T-cell (primary cell): ENCODE measurements at regions of chr6 and their contacts with region 1.

Region 1: GRCh38 chr6:10478187-10479040 is 42.7 kb upstream of the GCNT2 start:
- DNase-seq: peak in 2 of 35 experiments; percentile 2 to 56
- ATAC-seq: no peak
- H3K4me3 ChIP-seq: no peak overlapping the region
- H3K4me3 Mint-ChIP-seq: no peak overlapping the region
- H3K27ac ChIP-seq: no peak overlapping the region
- H3K27ac Mint-ChIP-seq: no peak overlapping the region
- H3K4me1 ChIP-seq: no peaks in the 10 kb centered on the region
- H3K4me1 Mint-ChIP-seq: peaks cover 0 to 1% (median 0%) of the 10 kb centered on the region in 3 donors
- H3K27me3 ChIP-seq: peaks cover 0 to 3% of the 10 kb centered on the region in 2 experiments
- H3K27me3 Mint-ChIP-seq: peaks cover 8 to 36% of the 10 kb centered on the region in 2 donors

Region 2: DNA sequence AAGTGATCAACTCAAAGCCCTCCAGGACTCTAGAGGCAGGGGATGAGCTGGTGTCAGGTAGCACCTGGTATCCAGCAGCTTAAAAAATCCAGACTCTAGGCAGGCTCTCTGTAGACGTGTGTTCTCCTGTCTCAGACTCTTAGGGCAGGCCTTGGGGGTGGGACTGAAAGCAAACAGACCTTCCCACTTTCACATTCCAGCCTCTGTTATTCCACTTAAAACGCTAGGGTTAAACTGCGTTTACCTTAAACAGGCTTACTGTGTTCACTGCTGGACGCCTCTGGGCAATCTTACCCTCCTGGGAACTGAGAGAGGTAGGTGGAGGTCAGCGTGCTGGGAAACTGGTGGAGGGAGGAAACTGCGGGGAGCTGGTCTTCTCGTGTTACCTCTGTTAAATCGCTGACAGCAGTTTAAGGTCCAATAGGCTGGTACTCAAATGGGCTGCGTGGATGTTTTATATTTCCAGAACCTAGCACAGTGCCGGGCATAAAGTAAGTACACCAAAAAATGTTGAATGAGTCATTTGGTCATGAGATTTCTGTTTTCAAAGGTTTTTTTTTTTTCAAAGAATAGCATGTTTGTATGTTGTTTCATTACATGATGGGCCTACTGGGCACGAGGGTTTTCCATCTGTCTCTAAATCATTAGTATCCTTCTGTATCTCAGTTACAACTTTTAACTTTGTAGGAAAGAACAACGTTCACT is 42.8 kb after region 1 on chr6 and contains the start of gene GCNT2:
- CTCF ChIA-PET with region 1: no interaction called
- POLR2A ChIA-PET with region 1: no interaction called
- DNase-seq: no peak
- ATAC-seq: no peak
- H3K4me3 ChIP-seq: no peak within 1 kb of the TSS
- H3K4me3 Mint-ChIP-seq: no peak within 1 kb of the TSS
- H3K27ac ChIP-seq: no peak within 1 kb of the TSS
- H3K27ac Mint-ChIP-seq: no peak within 1 kb of the TSS
- H3K4me1 ChIP-seq: no peaks in the 10 kb centered on the region
- H3K4me1 Mint-ChIP-seq: no peaks in the 10 kb centered on the region
- H3K27me3 ChIP-seq: peaks cover 0 to 3% of the 10 kb centered on the region in 2 experiments
- H3K27me3 Mint-ChIP-seq: peaks cover 5 to 10% of the 10 kb centered on the region in 2 donors
- total RNA-seq, gene GCNT2: 2.2 to 6.8 (median 2.9) TPM

Region 3: DNA sequence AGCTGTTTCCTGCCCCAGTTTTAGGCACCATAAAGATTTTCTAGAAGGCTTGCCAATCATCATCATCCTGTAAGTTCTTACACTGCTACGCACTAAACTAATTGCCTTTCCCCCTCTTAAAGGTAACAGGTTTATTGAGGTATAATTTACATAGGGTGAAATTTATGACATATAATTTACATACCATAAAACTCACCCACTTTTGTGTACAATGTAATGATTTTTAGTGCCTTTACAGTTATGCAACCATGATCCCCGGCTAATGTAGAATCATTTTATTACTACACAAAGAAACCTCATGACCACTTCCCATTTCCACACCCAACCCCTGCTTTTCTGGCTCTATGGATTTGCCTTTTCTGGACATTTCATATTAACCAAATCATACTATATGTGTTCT is 63.8 kb after region 1 on chr6:
- CTCF ChIA-PET with region 1: no interaction called
- POLR2A ChIA-PET with region 1: no interaction called
- DNase-seq: no peak
- ATAC-seq: no peak
- H3K4me3 ChIP-seq: no peak overlapping the region
- H3K4me3 Mint-ChIP-seq: no peak overlapping the region
- H3K27ac ChIP-seq: no peak overlapping the region
- H3K27ac Mint-ChIP-seq: no peak overlapping the region
- H3K4me1 ChIP-seq: no peaks in the 10 kb centered on the region
- H3K4me1 Mint-ChIP-seq: peaks cover 2 to 13% (median 5%) of the 10 kb centered on the region in 3 donors
- H3K27me3 ChIP-seq: no peaks in the 10 kb centered on the region
- H3K27me3 Mint-ChIP-seq: no peaks in the 10 kb centered on the region

Region 4: GRCh38 chr6:10598084-10598960 is 119.9 kb after region 1 on chr6:
- CTCF ChIA-PET with region 1: no interaction called
- POLR2A ChIA-PET with region 1: no interaction called
- DNase-seq: no peak
- ATAC-seq: no peak
- H3K4me3 ChIP-seq: no peak overlapping the region
- H3K4me3 Mint-ChIP-seq: no peak overlapping the region
- H3K27ac ChIP-seq: no peak overlapping the region
- H3K27ac Mint-ChIP-seq: no peak overlapping the region
- H3K4me1 ChIP-seq: no peaks in the 10 kb centered on the region
- H3K4me1 Mint-ChIP-seq: no peaks in the 10 kb centered on the region
- H3K27me3 ChIP-seq: no peaks in the 10 kb centered on the region
- H3K27me3 Mint-ChIP-seq: no peaks in the 10 kb centered on the region

Region 5: DNA sequence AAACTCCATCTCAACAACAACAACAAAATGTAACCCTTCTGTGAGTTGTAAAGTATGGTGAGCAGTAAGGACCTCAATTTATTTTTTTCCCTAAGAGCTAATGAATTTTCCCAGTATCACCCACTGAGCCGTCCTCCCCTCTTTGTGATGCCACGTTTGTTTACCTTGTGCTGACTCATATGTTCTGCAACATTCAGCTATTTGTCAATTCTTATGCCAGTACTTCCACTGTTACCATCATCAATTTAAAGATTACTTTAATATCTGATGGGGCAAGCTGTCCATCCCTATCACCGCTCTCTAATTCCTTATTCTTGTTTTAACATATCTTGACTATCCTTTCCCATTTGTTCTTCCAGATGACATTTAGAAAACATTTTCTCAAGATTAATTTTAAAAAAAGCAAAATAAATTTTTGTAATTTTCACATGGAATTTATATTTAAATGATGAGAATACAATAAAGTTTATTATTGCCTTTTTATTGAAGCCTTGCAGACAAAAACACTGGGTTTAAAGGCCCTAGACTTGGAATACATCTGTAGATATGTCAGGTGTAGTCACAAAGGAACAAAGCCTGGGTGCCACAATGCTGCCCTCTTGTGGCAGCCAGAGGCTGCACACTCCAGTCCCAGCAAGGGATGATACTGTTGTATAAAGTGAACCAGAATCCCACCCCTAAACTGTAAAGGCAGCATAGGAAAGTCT is 322.6 kb after region 1 on chr6:
- CTCF ChIA-PET with region 1: interaction called, 20 to 41 read pairs
- POLR2A ChIA-PET with region 1: no interaction called
- DNase-seq: peak in 34 of 35 experiments; percentile 5 to 74 (median 48)
- ATAC-seq: peak; percentile 72 to 81 (median 74)
- H3K4me3 ChIP-seq: no peak overlapping the region
- H3K4me3 Mint-ChIP-seq: no peak overlapping the region
- H3K27ac ChIP-seq: no peak overlapping the region
- H3K27ac Mint-ChIP-seq: no peak overlapping the region
- H3K4me1 ChIP-seq: no peaks in the 10 kb centered on the region
- H3K4me1 Mint-ChIP-seq: no peaks in the 10 kb centered on the region
- H3K27me3 ChIP-seq: no peaks in the 10 kb centered on the region
- H3K27me3 Mint-ChIP-seq: no peaks in the 10 kb centered on the region

Region 6: GRCh38 chr6:11064836-11065235 is 586.4 kb after region 1 on chr6:
- CTCF ChIA-PET with region 1: interaction called, 5 to 15 read pairs
- POLR2A ChIA-PET with region 1: no interaction called
- DNase-seq: no peak
- ATAC-seq: no peak
- H3K4me3 ChIP-seq: no peak overlapping the region
- H3K4me3 Mint-ChIP-seq: no peak overlapping the region
- H3K27ac ChIP-seq: no peak overlapping the region
- H3K27ac Mint-ChIP-seq: no peak overlapping the region
- H3K4me1 ChIP-seq: no peaks in the 10 kb centered on the region
- H3K4me1 Mint-ChIP-seq: no peaks in the 10 kb centered on the region
- H3K27me3 ChIP-seq: peaks cover 2 to 5% of the 10 kb centered on the region in 2 experiments
- H3K27me3 Mint-ChIP-seq: peaks cover 0 to 8% of the 10 kb centered on the region in 2 donors